A673 (cell line): ENCODE measurements at regions of chr3 and their contacts with region 1.

Region 1: GRCh38 chr3:50298836-50299637 is at the starts of genes HYAL3 and NAA80:
- DNase-seq: peak; percentile 95
- H3K4me3 ChIP-seq: peak within 1 kb of the TSS; percentile 68
- H3K27ac ChIP-seq: peak within 1 kb of the TSS; percentile 82
- H3K4me1 ChIP-seq: peaks cover 5% of the 10 kb centered on the region
- H3K27me3 ChIP-seq: no peaks in the 10 kb centered on the region
- CTCF ChIP-seq: 0 out of 2 replicates have a peak, but pooled peaks have one; percentile 21
- total RNA-seq, gene HYAL3: 3.0 and 3.7 TPM in 2 replicates
- total RNA-seq, gene NAA80: 5.3 and 7.0 TPM in 2 replicates

Region 2: DNA sequence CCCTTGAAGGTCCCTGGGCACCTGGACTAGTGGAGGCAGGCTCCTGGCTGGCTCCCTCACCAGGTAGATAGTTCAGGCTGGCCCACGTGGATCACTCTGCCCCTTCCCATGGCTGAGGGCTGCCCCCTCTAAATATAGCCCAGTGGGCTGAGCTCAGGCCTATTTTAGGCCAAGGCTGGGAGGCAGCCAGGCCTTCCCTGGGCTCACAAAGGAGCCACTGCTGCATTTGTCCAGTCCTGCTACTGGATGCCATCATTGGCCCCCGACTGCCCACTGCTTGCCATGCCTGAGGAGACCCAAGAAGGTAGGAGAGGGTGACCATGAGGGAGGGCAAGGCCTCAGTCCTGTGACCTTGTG is 20.2 kb before region 1 on chr3 and contains the start of gene LSMEM2:
- CTCF ChIA-PET with region 1: interaction called, 14 read pairs
- POLR2A ChIA-PET with region 1: no interaction called
- intact Hi-C with region 1: no loop called
- DNase-seq: no peak
- H3K4me3 ChIP-seq: no peak within 1 kb of the TSS
- H3K27ac ChIP-seq: no peak within 1 kb of the TSS
- H3K4me1 ChIP-seq: no peaks in the 10 kb centered on the region
- H3K27me3 ChIP-seq: no peaks in the 10 kb centered on the region
- CTCF ChIP-seq: no peak
- total RNA-seq, gene LSMEM2: not detected in 2 replicates

Region 3: GRCh38 chr3:50316657-50317242 is 17.7 kb after region 1 on chr3:
- CTCF ChIA-PET with region 1: no interaction called
- POLR2A ChIA-PET with region 1: no interaction called
- intact Hi-C with region 1: no loop called
- DNase-seq: no peak
- H3K4me3 ChIP-seq: no peak overlapping the region
- H3K27ac ChIP-seq: no peak overlapping the region
- H3K4me1 ChIP-seq: peaks cover under 1% of the 10 kb centered on the region
- H3K27me3 ChIP-seq: no peaks in the 10 kb centered on the region
- CTCF ChIP-seq: no peak

Region 4: DNA sequence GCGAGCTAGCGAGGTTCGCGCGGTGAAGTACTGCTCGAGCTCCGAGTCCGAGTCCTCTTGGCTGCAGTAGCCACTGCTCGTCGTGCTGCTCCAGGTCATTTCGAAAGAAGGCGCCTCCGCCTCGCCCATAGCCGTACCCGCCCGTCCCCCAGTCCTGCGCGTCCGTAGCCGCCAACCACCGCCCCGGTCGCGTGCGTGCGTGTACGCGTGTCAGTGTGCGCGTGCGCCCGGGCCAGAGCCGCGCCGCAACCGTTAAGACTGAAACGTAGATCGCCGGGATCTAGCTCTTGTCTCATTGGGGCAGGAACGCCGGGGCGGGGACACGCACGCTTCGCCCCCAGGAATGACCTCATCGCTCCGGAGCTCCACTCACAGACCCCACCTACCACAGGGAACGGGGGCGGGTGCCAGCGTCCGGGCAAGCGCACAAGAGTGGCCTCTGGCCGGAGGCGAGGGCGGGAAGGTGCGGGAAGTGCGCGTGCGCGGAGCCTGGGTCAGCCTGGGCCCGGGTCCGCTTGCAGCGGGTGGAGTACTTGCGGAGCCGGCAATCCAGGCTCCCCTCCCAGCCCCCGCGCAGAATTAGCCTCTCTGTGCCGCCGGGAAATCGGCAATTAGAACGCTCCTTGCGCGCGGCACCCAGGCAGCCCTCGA is 38.3 kb after region 1 on chr3:
- CTCF ChIA-PET with region 1: no interaction called
- POLR2A ChIA-PET with region 1: no interaction called
- intact Hi-C with region 1: no loop called
- DNase-seq: peak; percentile 95
- H3K4me3 ChIP-seq: peak overlapping the region; percentile 82
- H3K27ac ChIP-seq: peak overlapping the region; percentile 90
- H3K4me1 ChIP-seq: no peaks in the 10 kb centered on the region
- H3K27me3 ChIP-seq: no peaks in the 10 kb centered on the region
- CTCF ChIP-seq: no peak